Body of pancreas (tissue), 4 donors: ENCODE measurements at regions of chr4 and their contacts with region 1.

Region 1: GRCh38 chr4:53633608-53634007 is 42.3 kb upstream of the LNX1 start:
- DNase-seq: peak in 1 of 4 donors; percentile 27
- ATAC-seq: peak; percentile 35
- H3K4me3 ChIP-seq: no peak overlapping the region
- H3K27ac ChIP-seq: no peak overlapping the region
- H3K4me1 ChIP-seq: peaks cover 10% of the 10 kb centered on the region
- H3K27me3 ChIP-seq: no peaks in the 10 kb centered on the region
- CTCF ChIP-seq: no peak
- POLR2A ChIP-seq: no peak

Region 2: DNA sequence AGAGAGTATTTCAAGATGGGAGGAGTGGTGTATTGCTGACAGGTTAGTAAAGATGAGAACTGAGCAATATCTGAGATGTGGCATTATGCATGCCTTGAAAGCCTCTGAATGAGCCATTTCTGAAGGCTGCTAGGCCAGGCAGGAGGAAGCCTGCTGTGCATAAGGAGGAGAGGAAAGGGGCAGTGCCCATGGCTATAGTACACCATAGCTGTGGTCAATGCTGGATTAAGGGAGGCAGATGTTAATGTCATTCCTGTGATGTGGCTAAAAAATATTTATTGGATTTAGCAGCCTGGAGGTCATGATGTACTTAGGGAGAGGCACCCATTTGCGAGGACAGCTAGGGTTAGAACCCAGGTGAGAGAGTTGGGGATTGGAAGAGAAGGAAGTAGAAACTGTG is 87.7 kb after region 1 on chr4:
- intact Hi-C with region 1: loop called (anchors 5 kb)
- DNase-seq: no peak
- ATAC-seq: no peak
- H3K4me3 ChIP-seq: no peak overlapping the region
- H3K27ac ChIP-seq: no peak overlapping the region
- H3K4me1 ChIP-seq: no peaks in the 10 kb centered on the region
- H3K27me3 ChIP-seq: no peaks in the 10 kb centered on the region
- CTCF ChIP-seq: no peak
- POLR2A ChIP-seq: no peak